ENCODE measurements at regions of chr5 and their contacts with region 1.

Region 1: DNA sequence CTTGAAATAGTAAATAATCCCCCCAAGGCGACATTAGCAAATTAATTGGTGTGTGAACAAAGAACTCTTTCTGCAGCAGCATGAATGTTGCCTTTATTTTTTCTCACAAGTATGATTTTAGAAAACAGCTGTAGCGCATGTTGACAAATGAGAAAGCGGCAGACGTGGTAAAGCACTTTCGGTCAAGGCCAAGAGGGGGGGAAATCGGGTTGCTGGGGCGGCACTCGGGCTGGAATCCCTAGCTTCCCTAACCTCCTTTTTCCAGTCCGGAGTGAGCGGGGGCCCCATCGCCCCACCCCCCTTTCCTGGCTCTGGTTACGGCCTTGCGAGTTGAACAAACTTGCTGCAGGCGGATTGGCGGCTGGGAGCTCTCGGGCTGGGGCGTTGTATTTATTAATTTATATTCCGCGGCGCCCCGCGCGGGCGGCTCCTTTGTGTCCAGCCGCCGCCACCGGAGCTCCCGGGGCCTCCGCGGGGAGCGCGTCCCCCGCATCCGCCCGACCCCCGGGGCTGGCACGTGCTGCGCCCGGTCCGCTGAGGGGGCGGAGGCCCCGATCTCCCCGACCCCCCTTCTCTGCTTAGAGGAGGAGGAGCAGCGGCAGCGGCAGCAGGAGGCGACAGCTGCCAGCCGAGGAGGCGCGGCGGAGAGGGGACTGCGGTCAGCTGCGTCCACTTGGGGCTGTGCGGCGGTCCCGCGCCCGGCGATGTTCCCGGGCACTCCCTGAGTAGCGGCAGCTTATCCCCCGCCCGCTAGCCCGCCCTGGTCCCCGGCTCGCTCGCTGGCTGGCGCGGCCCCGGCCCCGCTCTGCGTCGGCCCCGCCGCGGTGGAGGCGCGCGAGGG is at the start of gene RHOBTB3:
- DNase-seq: peak; percentile 71 to 89
- H3K4me3 ChIP-seq: peak within 1 kb of the TSS; percentile 73
- H3K27ac ChIP-seq: peak within 1 kb of the TSS; percentile 56
- H3K4me1 ChIP-seq: peaks cover 64% of the 10 kb centered on the region
- H3K27me3 ChIP-seq: no peaks in the 10 kb centered on the region
- CTCF ChIP-seq: no peak
- total RNA-seq, gene RHOBTB3: 87.6 and 99.6 TPM in 2 replicates

Region 2: GRCh38 chr5:95600557-95600956 is 130.4 kb before region 1 on chr5:
- CTCF ChIA-PET with region 1: no interaction called
- POLR2A ChIA-PET with region 1: no interaction called
- intact Hi-C with region 1: no loop called
- DNase-seq: no peak
- H3K4me3 ChIP-seq: no peak overlapping the region
- H3K27ac ChIP-seq: no peak overlapping the region
- H3K4me1 ChIP-seq: no peaks in the 10 kb centered on the region
- H3K27me3 ChIP-seq: no peaks in the 10 kb centered on the region
- CTCF ChIP-seq: no peak

Region 3: GRCh38 chr5:95664204-95664786 is 66.7 kb before region 1 on chr5:
- CTCF ChIA-PET with region 1: interaction called, 3 read pairs
- POLR2A ChIA-PET with region 1: interaction called, 9 read pairs
- intact Hi-C with region 1: loop called (anchors 1 kb)
- DNase-seq: peak in 1 of 2 experiments; percentile 7
- H3K4me3 ChIP-seq: no peak overlapping the region
- H3K27ac ChIP-seq: no peak overlapping the region
- H3K4me1 ChIP-seq: 0 out of 2 replicates have a peak, but pooled peaks cover 10% of the 10 kb centered on the region
- H3K27me3 ChIP-seq: no peaks in the 10 kb centered on the region
- CTCF ChIP-seq: peak; percentile 90

Region 4: DNA sequence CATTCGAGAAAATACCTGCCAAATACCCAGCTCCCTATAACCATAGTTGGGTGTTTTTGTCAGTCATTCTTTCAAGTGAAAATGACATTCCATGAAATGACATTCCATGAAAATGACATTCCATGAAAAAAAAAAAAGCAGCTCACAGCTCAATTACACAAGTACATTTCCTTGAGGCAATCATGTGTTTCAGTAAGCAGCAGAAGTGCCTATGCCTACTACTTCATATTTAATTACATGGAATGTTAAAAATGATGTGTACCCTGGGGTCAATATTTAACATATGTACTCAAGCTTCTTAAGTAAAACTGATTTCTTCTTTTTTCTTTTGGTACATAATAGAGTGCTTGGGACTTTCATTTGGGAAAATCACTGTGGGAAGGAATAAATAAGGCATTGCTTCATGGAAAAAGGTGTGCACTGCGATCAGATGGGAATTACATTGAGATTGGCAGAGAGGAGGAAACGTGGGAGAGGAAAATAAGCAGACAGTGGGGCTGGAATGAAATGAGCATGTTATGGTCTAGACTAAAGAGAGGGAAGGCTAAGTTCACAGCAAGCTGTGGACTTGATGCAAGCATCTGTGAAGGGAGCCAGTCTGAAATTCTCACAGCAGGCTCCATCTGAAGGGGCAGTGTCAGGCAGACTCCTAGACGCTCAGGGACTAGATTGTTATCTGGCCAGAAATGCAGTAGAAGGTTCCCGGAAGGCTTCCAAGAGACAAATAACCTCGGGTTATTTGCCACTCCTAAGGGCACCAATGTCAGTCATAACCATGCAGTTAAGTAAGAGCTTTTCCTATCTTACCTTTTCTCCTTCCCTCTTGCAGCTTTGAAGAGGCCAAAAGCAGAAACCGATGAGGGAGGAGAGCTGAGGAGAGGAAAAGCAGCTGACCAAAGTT is 32.9 kb before region 1 on chr5:
- CTCF ChIA-PET with region 1: interaction called, 4 read pairs
- POLR2A ChIA-PET with region 1: no interaction called
- intact Hi-C with region 1: loop called (anchors 5 kb)
- DNase-seq: peak; percentile 33 to 67
- H3K4me3 ChIP-seq: no peak overlapping the region
- H3K27ac ChIP-seq: no peak overlapping the region
- H3K4me1 ChIP-seq: peaks cover 19% of the 10 kb centered on the region
- H3K27me3 ChIP-seq: no peaks in the 10 kb centered on the region
- CTCF ChIP-seq: no peak

Region 5: GRCh38 chr5:95712347-95712958 is 18.5 kb before region 1 on chr5:
- CTCF ChIA-PET with region 1: interaction called, 5 read pairs
- POLR2A ChIA-PET with region 1: interaction called, 8 read pairs
- intact Hi-C with region 1: loop called (anchors 1 kb)
- DNase-seq: peak; percentile 86 to 99
- H3K4me3 ChIP-seq: no peak overlapping the region
- H3K27ac ChIP-seq: peak overlapping the region; percentile 74
- H3K4me1 ChIP-seq: peaks cover 47% of the 10 kb centered on the region
- H3K27me3 ChIP-seq: no peaks in the 10 kb centered on the region
- CTCF ChIP-seq: no peak

Region 6: DNA sequence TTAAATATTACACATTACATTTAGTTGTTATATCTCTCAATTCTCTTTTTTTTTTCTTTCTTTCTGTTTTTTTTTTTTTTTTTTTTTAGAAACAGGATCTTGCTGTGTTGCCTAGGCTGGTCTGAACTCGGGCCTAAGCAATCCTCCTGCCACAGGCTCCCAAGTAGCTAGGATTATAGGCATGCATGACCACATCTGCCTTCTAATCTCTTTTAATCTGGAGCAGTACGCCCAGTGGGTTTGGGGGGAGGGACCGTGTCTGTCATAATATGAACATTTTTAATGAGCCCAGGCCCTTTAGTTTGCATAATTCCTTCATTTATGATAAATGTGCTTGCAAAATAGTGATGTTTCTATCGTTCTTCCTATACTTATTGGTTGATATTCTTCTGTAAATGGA is 10.5 kb after region 1 on chr5:
- CTCF ChIA-PET with region 1: interaction called, 13 read pairs
- POLR2A ChIA-PET with region 1: no interaction called
- intact Hi-C with region 1: no loop called
- DNase-seq: no peak
- H3K4me3 ChIP-seq: no peak overlapping the region
- H3K27ac ChIP-seq: no peak overlapping the region
- H3K4me1 ChIP-seq: no peaks in the 10 kb centered on the region; the same call in 1 of the 2 replicates
- H3K27me3 ChIP-seq: no peaks in the 10 kb centered on the region
- CTCF ChIP-seq: no peak

Region 7: GRCh38 chr5:95760273-95761191 is 29.6 kb after region 1 on chr5:
- CTCF ChIA-PET with region 1: no interaction called
- POLR2A ChIA-PET with region 1: no interaction called
- intact Hi-C with region 1: loop called (anchors 5 kb)
- DNase-seq: peak; percentile 6 to 69
- H3K4me3 ChIP-seq: no peak overlapping the region
- H3K27ac ChIP-seq: peak overlapping the region; percentile 37
- H3K4me1 ChIP-seq: peaks cover 24% of the 10 kb centered on the region; the same call in 1 of the 2 replicates
- H3K27me3 ChIP-seq: no peaks in the 10 kb centered on the region
- CTCF ChIP-seq: no peak

Region 8: GRCh38 chr5:95846554-95847260 is 115.8 kb after region 1 on chr5:
- CTCF ChIA-PET with region 1: no interaction called
- POLR2A ChIA-PET with region 1: no interaction called
- intact Hi-C with region 1: no loop called
- DNase-seq: peak; percentile 48 to 55
- H3K4me3 ChIP-seq: no peak overlapping the region
- H3K27ac ChIP-seq: no peak overlapping the region
- H3K4me1 ChIP-seq: peaks cover 25% of the 10 kb centered on the region
- H3K27me3 ChIP-seq: no peaks in the 10 kb centered on the region
- CTCF ChIP-seq: peak; percentile 95